ENCODE measurements at regions of chr6 and their contacts with region 1.

Region 1: DNA sequence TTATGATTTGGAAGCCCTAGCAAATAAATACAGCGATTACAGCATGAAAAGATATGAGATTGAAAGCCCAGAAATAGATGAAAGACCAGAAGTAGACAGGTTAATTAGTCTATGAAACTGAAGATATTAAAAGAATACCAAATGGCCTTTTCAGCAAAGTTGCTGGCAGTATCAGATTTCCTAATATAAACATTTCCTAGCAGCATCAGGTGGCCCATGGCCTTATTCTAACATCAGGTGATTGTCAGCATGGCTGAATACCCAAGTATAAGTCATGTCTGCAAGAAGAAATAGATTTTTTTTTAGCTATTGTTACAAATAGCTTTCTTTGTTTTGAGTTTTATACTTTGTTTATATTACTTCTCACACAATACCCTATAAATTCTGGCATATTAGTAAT is 93.2 kb downstream of the CLVS2 start:
- DNase-seq: peak; percentile 31
- ATAC-seq: no peak
- H3K4me3 ChIP-seq: no peak overlapping the region
- H3K27ac ChIP-seq: no peak overlapping the region
- H3K4me1 ChIP-seq: peaks cover 39% of the 10 kb centered on the region
- H3K27me3 ChIP-seq: no peaks in the 10 kb centered on the region
- CTCF ChIP-seq: no peak

Region 2: DNA sequence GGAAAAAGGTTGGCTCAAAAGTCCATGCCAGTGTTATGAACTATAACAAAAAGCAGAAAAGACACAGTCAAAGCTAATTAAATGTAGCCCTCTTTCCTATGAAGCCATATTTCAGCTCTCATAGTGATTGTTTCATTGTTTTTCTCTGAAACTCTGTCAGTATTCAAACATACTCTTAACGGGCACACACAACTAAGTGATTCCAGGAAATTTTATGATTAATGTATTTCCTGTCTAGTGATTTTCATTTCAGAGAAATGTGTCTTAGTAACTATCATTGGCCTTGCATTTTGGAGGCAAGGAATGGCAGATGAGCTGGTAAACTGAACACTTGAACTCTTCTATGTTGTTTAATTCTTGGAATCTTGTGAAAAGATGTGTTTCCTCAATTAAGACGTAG is 25.2 kb before region 1 on chr6:
- CTCF ChIA-PET with region 1: no interaction called
- POLR2A ChIA-PET with region 1: no interaction called
- intact Hi-C with region 1: no loop called
- DNase-seq: no peak
- ATAC-seq: no peak
- H3K4me3 ChIP-seq: no peak overlapping the region
- H3K27ac ChIP-seq: no peak overlapping the region
- H3K4me1 ChIP-seq: no peaks in the 10 kb centered on the region
- H3K27me3 ChIP-seq: 0 out of 2 replicates have a peak, but pooled peaks cover 6% of the 10 kb centered on the region
- CTCF ChIP-seq: no peak

Region 3: DNA sequence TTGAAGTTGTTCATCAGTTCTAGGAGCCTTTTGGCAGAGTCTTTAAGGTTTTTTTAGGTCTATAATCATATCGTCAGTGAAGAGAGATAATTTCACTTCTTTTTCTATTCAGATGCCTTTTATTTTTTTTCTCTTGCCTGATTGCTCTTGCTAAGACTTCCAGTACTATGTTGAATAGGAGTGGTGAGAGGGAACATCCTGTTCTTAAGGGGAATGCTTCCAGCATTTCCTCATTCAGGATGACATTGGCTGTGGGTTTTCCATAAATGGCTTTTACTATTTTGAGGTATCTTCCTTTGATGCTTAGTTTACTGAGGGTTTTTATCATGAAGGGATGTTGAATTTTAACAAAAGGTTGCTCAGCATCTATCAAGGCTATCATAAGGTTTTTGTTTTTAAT is 16.3 kb after region 1 on chr6:
- CTCF ChIA-PET with region 1: no interaction called
- POLR2A ChIA-PET with region 1: no interaction called
- intact Hi-C with region 1: no loop called
- DNase-seq: no peak
- ATAC-seq: no peak
- H3K4me3 ChIP-seq: no peak overlapping the region
- H3K27ac ChIP-seq: no peak overlapping the region
- H3K4me1 ChIP-seq: no peaks in the 10 kb centered on the region
- H3K27me3 ChIP-seq: no peaks in the 10 kb centered on the region
- CTCF ChIP-seq: no peak

Region 4: GRCh38 chr6:123118593-123119228 is 29.5 kb after region 1 on chr6:
- CTCF ChIA-PET with region 1: no interaction called
- POLR2A ChIA-PET with region 1: no interaction called
- intact Hi-C with region 1: loop called (anchors 2 kb)
- DNase-seq: peak; percentile 79
- ATAC-seq: peak; percentile 97
- H3K4me3 ChIP-seq: no peak overlapping the region
- H3K27ac ChIP-seq: no peak overlapping the region
- H3K4me1 ChIP-seq: peaks cover 8% of the 10 kb centered on the region; the same call in 1 of the 2 replicates
- H3K27me3 ChIP-seq: peaks cover 2% of the 10 kb centered on the region; the same call in 1 of the 2 replicates
- CTCF ChIP-seq: no peak